GM12878 (cell line): ENCODE measurements at regions of chr15 and their contacts with region 1.

Region 1: DNA sequence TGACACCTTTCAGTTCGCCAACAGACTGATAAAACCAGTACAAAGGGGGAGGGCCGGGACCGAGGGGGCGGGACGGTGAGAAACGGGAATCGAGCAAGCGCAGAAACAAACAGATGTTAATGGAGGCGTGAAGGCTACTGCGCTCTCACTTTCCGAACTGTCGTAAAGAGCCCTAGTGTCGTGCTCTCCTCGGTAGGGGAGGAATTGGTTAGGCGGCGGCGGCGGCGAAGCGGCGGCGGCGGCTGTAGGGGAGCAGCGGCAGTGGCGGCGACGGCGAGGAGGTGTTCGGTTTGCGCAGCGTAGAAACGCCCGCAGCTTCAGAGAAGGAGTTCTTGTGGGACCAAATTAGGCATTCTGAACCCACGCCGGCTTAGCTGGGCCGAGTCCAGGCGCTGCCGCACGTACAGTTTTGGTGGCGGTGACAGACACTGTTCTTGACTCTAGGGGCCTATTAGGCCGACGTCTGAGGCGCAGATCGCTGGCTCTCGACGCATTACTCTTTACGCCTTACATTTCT is at the start of gene RNF111:
- DNase-seq: peak; percentile 90
- ATAC-seq: peak; percentile 90
- H3K4me3 ChIP-seq: peak within 1 kb of the TSS; percentile 75
- H3K27ac ChIP-seq: peak within 1 kb of the TSS; percentile 92
- H3K4me1 ChIP-seq: no peaks in the 10 kb centered on the region
- H3K27me3 ChIP-seq: no peaks in the 10 kb centered on the region
- CTCF ChIP-seq: no peak
- EP300 ChIP-seq: no peak
- POLR2A ChIP-seq: peak; percentile 76
- RAD21 ChIP-seq: no peak
- polyA plus RNA-seq, gene RNF111: 8.6 TPM

Region 2: DNA sequence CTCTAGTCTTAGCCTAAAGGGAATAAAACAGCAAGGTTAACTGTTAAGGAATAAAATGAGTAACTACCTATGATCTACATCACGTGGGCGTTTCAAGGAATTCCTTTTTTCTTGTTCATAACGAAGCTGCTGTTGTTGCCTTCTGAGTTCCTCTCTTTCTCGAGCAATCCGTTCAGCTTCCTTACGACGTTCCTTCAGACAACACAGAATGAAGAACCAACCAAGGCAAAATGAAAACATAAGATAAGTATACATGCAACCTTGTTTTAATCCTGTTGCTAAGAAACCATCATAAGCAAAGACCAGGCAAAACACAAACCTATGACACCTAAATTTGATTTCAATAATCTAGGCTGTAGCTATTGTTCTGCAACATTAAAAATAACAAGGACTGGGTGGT is 98.2 kb before region 1 on chr15:
- CTCF ChIA-PET with region 1: no interaction called
- POLR2A ChIA-PET with region 1: no interaction called
- RAD21 ChIA-PET with region 1: no interaction called
- SMC1A ChIA-PET with region 1: no interaction called
- in situ Hi-C with region 1: no loop called
- intact Hi-C with region 1: no loop called
- DNase-seq: no peak
- ATAC-seq: no peak
- H3K4me3 ChIP-seq: no peak overlapping the region
- H3K27ac ChIP-seq: no peak overlapping the region
- H3K4me1 ChIP-seq: no peaks in the 10 kb centered on the region
- H3K27me3 ChIP-seq: no peaks in the 10 kb centered on the region
- CTCF ChIP-seq: no peak
- EP300 ChIP-seq: no peak
- POLR2A ChIP-seq: no peak
- RAD21 ChIP-seq: no peak

Region 3: GRCh38 chr15:59051873-59052861 is 64.6 kb after region 1 on chr15:
- CTCF ChIA-PET with region 1: interaction called, 3 read pairs
- POLR2A ChIA-PET with region 1: interaction called, 6 read pairs
- RAD21 ChIA-PET with region 1: interaction called, 5 read pairs
- SMC1A ChIA-PET with region 1: interaction called, 4 read pairs
- in situ Hi-C with region 1: no loop called
- intact Hi-C with region 1: loop called (anchors 2 kb)
- DNase-seq: no peak
- ATAC-seq: peak; percentile 45; the same call in 2 of the 3 replicates
- H3K4me3 ChIP-seq: no peak overlapping the region
- H3K27ac ChIP-seq: no peak overlapping the region
- H3K4me1 ChIP-seq: no peaks in the 10 kb centered on the region
- H3K27me3 ChIP-seq: no peaks in the 10 kb centered on the region
- CTCF ChIP-seq: no peak
- EP300 ChIP-seq: no peak
- POLR2A ChIP-seq: no peak
- RAD21 ChIP-seq: no peak